ENCODE measurements at regions of chr11 and their contacts with region 1.

Region 1: DNA sequence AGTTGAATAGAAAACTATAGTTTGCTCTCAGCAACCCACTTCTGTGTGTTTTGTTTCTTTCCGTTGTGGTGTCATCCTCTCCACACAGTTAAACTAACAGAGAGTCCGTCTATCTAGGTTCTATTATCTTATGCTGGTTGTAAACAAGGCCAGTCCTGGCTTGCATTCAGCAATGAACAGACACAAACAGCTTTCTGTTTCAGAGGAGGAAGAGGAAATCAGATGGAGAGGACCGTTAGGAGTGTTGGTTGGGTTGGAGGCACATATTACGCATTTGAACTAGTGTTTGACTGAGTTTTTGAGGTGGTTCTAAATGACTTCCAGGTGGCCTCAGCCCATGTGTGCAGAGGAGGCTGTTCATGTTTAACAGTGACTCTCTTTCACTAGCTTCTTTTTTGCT is 129.5 kb upstream of the SORL1-AS1 start:
- DNase-seq: peak in 2 of 14 experiments; percentile 16 to 52
- ATAC-seq: peak; percentile 61
- H3K4me3 ChIP-seq: no peak overlapping the region
- H3K4me3 Mint-ChIP-seq: no peak overlapping the region
- H3K27ac ChIP-seq: peak overlapping the region in 1 of 2 donors; percentile 53
- H3K27ac Mint-ChIP-seq: peak overlapping the region; percentile 88
- H3K4me1 ChIP-seq: peaks cover 27% of the 10 kb centered on the region
- H3K4me1 Mint-ChIP-seq: peaks cover 35% of the 10 kb centered on the region
- H3K27me3 ChIP-seq: no peaks in the 10 kb centered on the region
- H3K27me3 Mint-ChIP-seq: no peaks in the 10 kb centered on the region
- CTCF ChIP-seq: no peak

Region 2: DNA sequence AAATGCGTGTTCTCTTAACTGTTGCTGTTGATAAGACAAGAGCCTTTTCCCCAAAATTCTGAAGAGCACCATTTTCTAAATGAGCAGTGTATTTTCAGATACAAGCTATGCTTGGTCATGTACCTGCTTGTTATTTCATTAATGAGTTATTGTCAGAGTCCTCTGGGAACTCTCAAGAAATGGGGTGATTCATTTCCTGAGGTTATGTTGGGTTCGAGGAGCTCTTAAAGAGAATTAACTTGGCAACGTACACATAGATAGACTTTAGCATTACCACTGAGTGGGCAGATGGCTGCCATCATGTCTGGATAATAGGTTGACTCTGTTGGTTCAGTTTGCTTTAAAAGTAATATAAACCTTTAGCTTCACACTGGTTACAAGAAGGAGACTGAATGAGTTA is 41.7 kb before region 1 on chr11:
- CTCF ChIA-PET with region 1: no interaction called
- POLR2A ChIA-PET with region 1: no interaction called
- intact Hi-C with region 1: loop called in 1 of 2 experiments (anchors 5 kb)
- DNase-seq: no peak
- ATAC-seq: no peak
- H3K4me3 ChIP-seq: no peak overlapping the region
- H3K4me3 Mint-ChIP-seq: no peak overlapping the region
- H3K27ac ChIP-seq: no peak overlapping the region
- H3K27ac Mint-ChIP-seq: peak overlapping the region; percentile 51
- H3K4me1 ChIP-seq: peaks cover 16% of the 10 kb centered on the region
- H3K4me1 Mint-ChIP-seq: peaks cover 69% of the 10 kb centered on the region
- H3K27me3 ChIP-seq: no peaks in the 10 kb centered on the region
- H3K27me3 Mint-ChIP-seq: no peaks in the 10 kb centered on the region
- CTCF ChIP-seq: no peak

Region 3: DNA sequence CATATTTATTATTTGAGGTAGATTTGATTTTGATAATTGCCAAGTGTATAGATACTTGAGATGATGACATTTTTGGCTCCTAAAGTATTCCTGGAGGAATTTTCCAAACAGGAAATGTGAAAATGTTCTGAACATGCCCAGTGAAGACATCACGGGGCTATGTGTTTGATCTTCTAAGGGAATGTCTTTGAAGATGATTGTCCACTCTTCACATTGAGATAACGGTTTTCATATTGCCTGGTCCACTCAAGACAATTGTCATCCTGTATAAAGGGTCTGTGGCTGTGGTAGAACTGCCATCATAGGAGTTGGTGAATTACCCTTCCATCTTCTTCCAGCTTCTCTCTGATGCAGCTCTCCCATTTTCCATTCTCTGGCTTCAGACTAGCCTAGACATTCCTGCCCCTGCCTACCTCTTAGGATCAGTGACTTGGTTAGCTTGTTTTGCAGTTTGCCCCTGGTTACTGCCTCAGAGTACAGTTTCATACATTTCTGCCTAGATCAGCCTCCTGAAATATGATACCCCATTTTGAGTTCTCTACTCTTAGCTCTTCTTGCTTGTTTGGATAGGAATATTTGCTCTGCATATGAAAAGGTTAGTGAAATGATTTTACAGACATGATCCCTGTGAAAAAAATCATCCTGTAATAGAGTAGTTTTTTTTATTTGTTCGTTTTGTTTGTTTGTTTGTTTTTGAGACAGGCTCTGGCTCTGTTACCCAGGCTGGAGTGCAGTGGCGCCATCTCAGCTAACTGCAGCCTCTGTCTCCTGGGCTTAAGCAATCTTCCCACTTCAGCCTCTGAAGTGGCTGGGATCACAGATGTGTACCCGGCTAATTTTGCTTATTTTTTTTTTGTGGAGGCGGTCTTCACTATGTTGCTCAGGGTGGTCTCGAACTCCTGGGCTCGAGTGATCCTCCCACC is 18.1 kb before region 1 on chr11:
- CTCF ChIA-PET with region 1: no interaction called
- POLR2A ChIA-PET with region 1: no interaction called
- intact Hi-C with region 1: no loop called
- DNase-seq: no peak
- ATAC-seq: no peak
- H3K4me3 ChIP-seq: no peak overlapping the region
- H3K4me3 Mint-ChIP-seq: no peak overlapping the region
- H3K27ac ChIP-seq: no peak overlapping the region
- H3K27ac Mint-ChIP-seq: peak overlapping the region; percentile 45
- H3K4me1 ChIP-seq: no peaks in the 10 kb centered on the region
- H3K4me1 Mint-ChIP-seq: peaks cover 34% of the 10 kb centered on the region
- H3K27me3 ChIP-seq: no peaks in the 10 kb centered on the region
- H3K27me3 Mint-ChIP-seq: no peaks in the 10 kb centered on the region
- CTCF ChIP-seq: no peak

Region 4: DNA sequence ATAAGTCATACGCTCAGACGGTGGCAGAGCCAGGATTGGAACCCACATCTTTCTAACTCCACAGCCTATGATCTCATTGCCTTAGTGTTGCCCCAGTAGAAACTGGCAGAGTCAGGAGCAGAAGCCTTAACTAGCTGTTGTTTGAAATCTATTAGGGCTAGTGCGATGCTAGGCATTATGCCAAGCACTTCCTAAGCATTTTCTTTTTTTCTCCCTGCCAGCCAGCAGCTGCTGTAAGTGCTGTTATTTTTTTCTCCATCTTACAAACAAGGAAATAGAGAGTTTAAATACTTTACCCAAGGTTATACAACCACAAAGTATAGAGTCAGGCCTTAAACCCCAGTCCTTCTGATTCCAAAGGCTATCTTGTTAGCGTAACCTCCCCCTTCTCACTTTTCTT is 31.4 kb after region 1 on chr11:
- CTCF ChIA-PET with region 1: no interaction called
- POLR2A ChIA-PET with region 1: no interaction called
- intact Hi-C with region 1: no loop called
- DNase-seq: no peak
- ATAC-seq: no peak
- H3K4me3 ChIP-seq: no peak overlapping the region
- H3K4me3 Mint-ChIP-seq: no peak overlapping the region
- H3K27ac ChIP-seq: no peak overlapping the region
- H3K27ac Mint-ChIP-seq: no peak overlapping the region
- H3K4me1 ChIP-seq: no peaks in the 10 kb centered on the region
- H3K4me1 Mint-ChIP-seq: no peaks in the 10 kb centered on the region
- H3K27me3 ChIP-seq: no peaks in the 10 kb centered on the region
- H3K27me3 Mint-ChIP-seq: no peaks in the 10 kb centered on the region
- CTCF ChIP-seq: no peak

Measured in CD4-positive, alpha-beta T cell (primary cell).